Aorta (tissue), 5 donors: ENCODE measurements at regions of chr12 and their contacts with region 1.

Region 1: GRCh38 chr12:95790033-95790911 is at the start of gene NTN4:
- DNase-seq: peak; percentile 68 to 88
- ATAC-seq: peak; percentile 62
- H3K4me3 ChIP-seq: peak within 1 kb of the TSS; percentile 89 to 94
- H3K27ac ChIP-seq: peak within 1 kb of the TSS; percentile 16 to 58
- H3K4me1 ChIP-seq: peaks cover 0 to 4% of the 10 kb centered on the region in 2 donors
- H3K27me3 ChIP-seq: no peaks in the 10 kb centered on the region
- total RNA-seq, gene NTN4: 60.9 to 66.7 TPM

Region 2: GRCh38 chr12:95593266-95593871 is 196.9 kb before region 1 on chr12:
- intact Hi-C with region 1: no loop called
- DNase-seq: no peak
- ATAC-seq: peak; percentile 22
- H3K4me3 ChIP-seq: no peak overlapping the region
- H3K27ac ChIP-seq: no peak overlapping the region
- H3K4me1 ChIP-seq: no peaks in the 10 kb centered on the region
- H3K27me3 ChIP-seq: no peaks in the 10 kb centered on the region

Region 3: GRCh38 chr12:95642583-95642982 is 147.7 kb before region 1 on chr12:
- intact Hi-C with region 1: loop called in 1 of 2 experiments (anchors 5 kb)
- DNase-seq: no peak
- ATAC-seq: no peak
- H3K4me3 ChIP-seq: no peak overlapping the region
- H3K27ac ChIP-seq: no peak overlapping the region
- H3K4me1 ChIP-seq: no peaks in the 10 kb centered on the region
- H3K27me3 ChIP-seq: no peaks in the 10 kb centered on the region

Region 4: GRCh38 chr12:95663525-95663924 is 126.7 kb before region 1 on chr12:
- intact Hi-C with region 1: no loop called
- DNase-seq: no peak
- ATAC-seq: no peak
- H3K4me3 ChIP-seq: no peak overlapping the region
- H3K27ac ChIP-seq: no peak overlapping the region
- H3K4me1 ChIP-seq: peaks cover 2 to 3% of the 10 kb centered on the region in 2 donors
- H3K27me3 ChIP-seq: no peaks in the 10 kb centered on the region

Region 5: GRCh38 chr12:95733141-95733825 is 57.0 kb before region 1 on chr12:
- intact Hi-C with region 1: loop called (anchors 5 kb)
- DNase-seq: no peak
- ATAC-seq: peak; percentile 56
- H3K4me3 ChIP-seq: no peak overlapping the region
- H3K27ac ChIP-seq: peak overlapping the region; percentile 34 to 74
- H3K4me1 ChIP-seq: peaks cover 2 to 13% of the 10 kb centered on the region in 2 donors
- H3K27me3 ChIP-seq: no peaks in the 10 kb centered on the region

Region 6: GRCh38 chr12:95739561-95740313 is 50.5 kb before region 1 on chr12:
- intact Hi-C with region 1: loop called (anchors 5 kb)
- DNase-seq: peak; percentile 50 to 78
- ATAC-seq: peak; percentile 43
- H3K4me3 ChIP-seq: no peak overlapping the region
- H3K27ac ChIP-seq: no peak overlapping the region
- H3K4me1 ChIP-seq: peaks cover 0 to 13% of the 10 kb centered on the region in 2 donors
- H3K27me3 ChIP-seq: no peaks in the 10 kb centered on the region